ENCODE measurements at regions of chr2 and their contacts with region 1.

Region 1: GRCh38 chr2:127067620-127068350 is 39.2 kb downstream of the BIN1 start:
- DNase-seq: peak; percentile 82
- H3K4me3 Mint-ChIP-seq: no peak overlapping the region
- H3K27ac Mint-ChIP-seq: no peak overlapping the region
- H3K4me1 Mint-ChIP-seq: peaks cover 17% of the 10 kb centered on the region
- H3K27me3 Mint-ChIP-seq: no peaks in the 10 kb centered on the region

Region 2: GRCh38 chr2:127081826-127082633 is 14.2 kb after region 1 on chr2:
- CTCF ChIA-PET with region 1: interaction called, 52 read pairs
- DNase-seq: peak; percentile 91
- H3K4me3 Mint-ChIP-seq: peak overlapping the region; percentile 83
- H3K27ac Mint-ChIP-seq: peak overlapping the region; percentile 91
- H3K4me1 Mint-ChIP-seq: peaks cover 86% of the 10 kb centered on the region
- H3K27me3 Mint-ChIP-seq: peaks cover 8% of the 10 kb centered on the region

Measured in activated naive CD4-positive, alpha-beta T cell treated with anti-CD3 and anti-CD28 coated beads, Interleukin-2, amount 10 ng/mL, durations not matched to agents 7 days and 5 days (primary cell).